ENCODE measurements at regions of chr17 and their contacts with region 1.

Region 1: DNA sequence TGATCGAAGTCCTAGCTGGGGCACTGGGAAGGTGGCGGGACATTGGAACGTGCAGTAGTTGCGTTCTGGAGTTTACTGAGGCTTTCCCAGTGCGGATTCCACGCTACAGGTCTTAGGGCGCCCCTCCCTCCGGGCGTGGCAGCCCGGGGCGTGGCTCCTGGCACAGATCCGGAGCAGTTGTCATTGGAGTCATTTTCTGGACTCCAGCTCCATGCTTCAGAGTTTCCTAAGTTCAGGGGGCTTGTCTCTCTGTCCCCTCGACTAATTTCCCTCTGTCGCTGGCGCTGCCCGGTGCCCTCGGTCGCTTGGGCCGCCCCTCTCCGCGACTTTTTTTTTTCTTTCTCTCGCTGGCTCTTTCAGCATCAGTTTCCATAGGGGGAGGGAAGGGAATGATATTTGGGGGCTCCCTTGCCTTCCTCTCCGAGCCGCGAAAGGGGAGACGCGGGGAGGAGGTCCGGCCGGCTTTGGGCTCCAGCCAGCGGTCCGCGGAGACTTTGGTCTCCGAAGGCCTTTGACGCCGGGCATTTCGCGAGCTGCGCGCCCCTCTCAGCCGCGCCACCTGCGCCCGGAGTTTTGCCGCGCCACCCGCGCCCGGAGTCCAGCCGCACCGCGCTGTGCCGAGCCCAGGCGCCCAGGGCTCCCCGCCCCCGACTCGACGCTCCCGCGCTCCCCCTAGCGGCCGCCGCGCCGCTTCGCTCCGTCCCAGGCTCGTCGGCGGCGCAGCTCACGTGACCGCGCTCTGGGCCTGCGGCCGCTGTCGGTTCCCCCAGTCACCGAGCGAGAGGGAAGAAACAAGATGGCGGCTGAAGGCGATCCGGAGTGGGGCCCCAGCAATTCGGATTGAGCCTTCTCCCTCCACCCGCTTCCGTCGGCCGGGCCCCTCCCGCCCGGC is at the start of gene BPTF:
- DNase-seq: peak; percentile 89
- H3K4me3 Mint-ChIP-seq: peak within 1 kb of the TSS; percentile 98
- H3K27ac Mint-ChIP-seq: peak within 1 kb of the TSS; percentile 99
- H3K4me1 Mint-ChIP-seq: peaks cover 17% of the 10 kb centered on the region
- H3K27me3 Mint-ChIP-seq: peaks cover 6% of the 10 kb centered on the region
- total RNA-seq, gene BPTF: 90.8 and 91.2 TPM in 2 replicates

Region 2: DNA sequence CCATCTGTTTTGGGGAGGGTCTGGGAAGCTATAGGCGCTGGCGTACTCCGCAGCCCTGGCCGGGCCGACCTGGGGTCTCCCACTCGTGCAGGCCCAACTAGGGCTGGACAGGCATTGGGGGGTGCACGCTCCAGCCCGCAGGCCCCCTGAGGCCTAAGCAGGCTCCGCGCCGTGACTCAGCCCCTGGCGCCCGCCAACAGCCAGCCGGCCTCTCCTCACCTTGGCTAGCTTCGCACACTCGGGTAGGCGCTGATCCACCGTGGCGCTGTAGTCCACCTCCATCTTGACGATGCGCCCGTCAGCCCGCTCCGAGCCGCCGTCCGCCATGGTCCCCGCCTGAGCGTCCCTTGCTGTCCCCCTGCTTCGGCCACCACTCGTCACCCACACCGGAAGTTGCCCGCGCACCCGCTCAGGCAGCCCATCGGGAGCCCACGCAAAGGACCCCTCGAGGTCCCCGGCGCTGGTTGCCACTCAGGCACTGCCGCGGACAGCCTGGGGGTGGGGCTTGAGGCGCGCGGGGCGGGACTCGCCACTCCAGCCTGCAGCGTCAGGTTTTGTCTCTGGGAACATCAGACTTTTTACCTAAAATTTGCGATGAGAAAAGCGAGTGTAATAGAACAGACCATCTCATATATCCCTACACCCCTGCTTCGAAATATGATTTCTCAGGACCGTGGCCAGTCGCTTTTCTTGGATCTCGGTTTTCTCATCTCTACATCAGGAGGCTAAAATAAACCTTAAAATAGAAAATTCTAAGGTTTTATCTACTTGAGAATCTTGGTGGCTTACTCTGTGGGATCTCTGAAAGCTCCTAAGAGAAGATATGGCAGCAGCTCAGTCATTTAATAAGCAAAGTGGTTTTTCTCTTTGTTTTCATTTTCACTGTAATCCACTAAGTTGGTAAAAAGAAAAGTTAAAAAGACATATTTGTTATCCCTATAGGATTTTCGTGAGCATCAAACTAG is 458.5 kb before region 1 on chr17 and contains the start of gene PSMD12:
- intact Hi-C with region 1: loop called (anchors 5 kb)
- DNase-seq: peak; percentile 90
- H3K4me3 Mint-ChIP-seq: peak within 1 kb of the TSS; percentile 96
- H3K27ac Mint-ChIP-seq: peak within 1 kb of the TSS; percentile 95
- H3K4me1 Mint-ChIP-seq: peaks cover 45% of the 10 kb centered on the region
- H3K27me3 Mint-ChIP-seq: peaks cover 20% of the 10 kb centered on the region
- total RNA-seq, gene PSMD12: 75.1 and 75.4 TPM in 2 replicates

Region 3: GRCh38 chr17:68398691-68399637 is 574.0 kb after region 1 on chr17:
- intact Hi-C with region 1: no loop called
- DNase-seq: peak; percentile 19
- H3K4me3 Mint-ChIP-seq: peak overlapping the region; percentile 39
- H3K27ac Mint-ChIP-seq: peak overlapping the region; percentile 84
- H3K4me1 Mint-ChIP-seq: peaks cover 31% of the 10 kb centered on the region
- H3K27me3 Mint-ChIP-seq: no peaks in the 10 kb centered on the region